A549 (cell line): ENCODE measurements at regions of chr7 and their contacts with region 1.

Region 1: GRCh38 chr7:35714862-35715261 is 19.9 kb upstream of the HERPUD2 start:
- DNase-seq: no peak
- ATAC-seq: peak; percentile 39 to 56; a peak in 4 of 6 replicates
- H3K4me3 ChIP-seq: no peak overlapping the region
- H3K27ac ChIP-seq: no peak overlapping the region
- H3K4me1 ChIP-seq: peaks cover 16% of the 10 kb centered on the region; the same call in 2 of the 3 replicates
- CTCF ChIP-seq: no peak
- EP300 ChIP-seq: no peak
- POLR2A ChIP-seq: no peak
- RAD21 ChIP-seq: no peak

Region 2: GRCh38 chr7:35253710-35254495 is 461.0 kb before region 1 on chr7 and contains the start of gene TBX20:
- CTCF ChIA-PET with region 1: no interaction called
- POLR2A ChIA-PET with region 1: no interaction called
- DNase-seq: peak; percentile 79 to 80
- ATAC-seq: peak; percentile 96
- H3K4me3 ChIP-seq: peak within 1 kb of the TSS; percentile 65
- H3K27ac ChIP-seq: peak within 1 kb of the TSS; percentile 68 to 86
- H3K4me1 ChIP-seq: peaks cover 14% of the 10 kb centered on the region; the same call in 2 of the 3 replicates
- CTCF ChIP-seq: no peak
- EP300 ChIP-seq: no peak
- POLR2A ChIP-seq: peak; percentile 93
- RAD21 ChIP-seq: no peak
- polyA plus RNA-seq, gene TBX20: 1.6 and 2.3 TPM in 2 replicates

Region 3: DNA sequence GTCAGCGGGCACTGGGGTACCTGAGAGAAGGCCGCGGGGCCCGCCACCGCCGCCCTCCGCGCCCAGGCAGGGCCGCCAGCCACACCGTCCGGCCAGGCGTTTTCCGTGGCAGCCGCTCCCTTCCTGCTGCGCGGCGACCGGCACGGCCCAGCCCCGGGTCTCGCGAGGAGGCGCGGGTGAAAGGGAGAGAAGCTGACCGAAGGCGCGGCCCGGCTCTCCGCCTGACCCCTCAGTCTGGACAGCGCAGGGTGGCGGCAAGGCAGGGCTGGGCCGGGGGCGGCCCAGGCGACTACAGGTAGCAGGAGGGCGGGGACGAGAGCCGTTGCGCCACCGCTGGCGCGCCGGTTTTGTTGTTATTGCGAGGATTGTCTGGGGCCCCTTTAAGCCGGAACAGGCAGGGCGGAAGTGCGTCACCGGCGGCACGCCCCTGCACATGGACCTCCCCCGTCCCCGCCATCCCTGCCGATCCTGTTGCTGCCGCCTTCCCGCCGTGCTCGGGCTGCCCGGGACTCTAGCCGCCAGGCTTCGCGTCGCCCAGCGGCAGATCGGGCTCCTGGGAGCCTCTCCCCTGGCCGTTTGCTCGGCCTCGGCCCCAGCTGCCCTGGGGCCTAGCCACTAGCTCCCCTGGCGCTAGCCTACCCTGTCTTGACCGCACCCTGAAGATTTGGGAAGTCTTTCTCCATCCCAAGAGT is 19.9 kb before region 1 on chr7 and contains the start of gene HERPUD2:
- CTCF ChIA-PET with region 1: interaction called, 57 read pairs
- POLR2A ChIA-PET with region 1: no interaction called
- DNase-seq: peak; percentile 87 to 95
- ATAC-seq: peak; percentile 96
- H3K4me3 ChIP-seq: peak within 1 kb of the TSS; percentile 100
- H3K27ac ChIP-seq: peak within 1 kb of the TSS; percentile 98 to 100
- H3K4me1 ChIP-seq: peaks cover 49% of the 10 kb centered on the region
- CTCF ChIP-seq: no peak
- EP300 ChIP-seq: no peak
- POLR2A ChIP-seq: peak; percentile 84
- RAD21 ChIP-seq: no peak
- polyA plus RNA-seq, gene HERPUD2: 34.8 and 47.8 TPM in 2 replicates

Region 4: DNA sequence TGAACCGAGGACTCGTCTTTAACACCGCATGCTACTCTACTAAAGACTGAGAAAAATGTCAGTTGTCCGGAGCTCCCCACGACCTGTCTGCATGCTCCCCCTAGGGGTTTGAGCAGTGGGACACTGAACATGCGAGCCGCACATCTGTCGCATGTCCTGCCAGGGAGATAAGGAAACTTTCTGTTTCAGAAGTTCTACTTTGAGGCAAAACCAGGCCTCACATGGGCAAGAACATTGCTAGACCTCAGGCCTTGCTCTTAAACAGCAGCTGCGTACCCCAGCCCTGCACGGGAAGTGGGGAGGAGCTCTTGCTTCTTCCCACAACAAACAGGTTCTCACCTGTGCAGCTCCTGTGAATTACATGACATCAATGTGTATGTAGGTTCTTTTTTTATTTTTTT is 10.4 kb after region 1 on chr7:
- CTCF ChIA-PET with region 1: interaction called, 19 read pairs
- POLR2A ChIA-PET with region 1: no interaction called
- DNase-seq: no peak
- ATAC-seq: no peak
- H3K4me3 ChIP-seq: no peak overlapping the region
- H3K27ac ChIP-seq: no peak overlapping the region
- H3K4me1 ChIP-seq: no peaks in the 10 kb centered on the region
- CTCF ChIP-seq: no peak
- EP300 ChIP-seq: no peak
- POLR2A ChIP-seq: no peak
- RAD21 ChIP-seq: no peak